K562 (cell line): ENCODE measurements at regions of chr1 and their contacts with region 1.

Region 1: GRCh38 chr1:9494929-9495758 is 44.1 kb upstream of the SLC25A33 start:
- DNase-seq: peak; percentile 79 to 90 (median 86)
- ATAC-seq: peak; percentile 95
- H3K4me3 ChIP-seq: 0 out of 2 replicates have a peak overlapping the region, but pooled peaks have one; percentile 24
- H3K27ac ChIP-seq: no peak overlapping the region
- H3K4me1 ChIP-seq: peaks cover 4 to 8% of the 10 kb centered on the region in 2 experiments; a peak in 3 of 5 replicates
- H3K27me3 ChIP-seq: peaks cover 8 to 54% of the 10 kb centered on the region in 2 experiments; a peak in 4 of 5 replicates
- CTCF ChIP-seq: peak; percentile 96 to 98 (median 97)
- EP300 ChIP-seq: no peak
- POLR2A ChIP-seq: no peak
- RAD21 ChIP-seq: peak; percentile 79 to 96

Region 2: GRCh38 chr1:9269078-9269501 is 226.1 kb before region 1 on chr1:
- CTCF ChIA-PET with region 1: interaction called, 32 read pairs
- POLR2A ChIA-PET with region 1: interaction called, 6 read pairs
- in situ Hi-C with region 1: no loop called
- intact Hi-C with region 1: loop called (anchors 1 kb)
- DNase-seq: no peak
- ATAC-seq: peak; percentile 36; the same call in 2 of the 3 replicates
- H3K4me3 ChIP-seq: no peak overlapping the region
- H3K27ac ChIP-seq: no peak overlapping the region
- H3K4me1 ChIP-seq: peaks cover 0 to 9% of the 10 kb centered on the region in 2 experiments; a peak in 2 of 5 replicates
- H3K27me3 ChIP-seq: peaks cover 64 to 83% of the 10 kb centered on the region in 2 experiments
- CTCF ChIP-seq: no peak
- EP300 ChIP-seq: no peak
- POLR2A ChIP-seq: no peak
- RAD21 ChIP-seq: no peak

Region 3: DNA sequence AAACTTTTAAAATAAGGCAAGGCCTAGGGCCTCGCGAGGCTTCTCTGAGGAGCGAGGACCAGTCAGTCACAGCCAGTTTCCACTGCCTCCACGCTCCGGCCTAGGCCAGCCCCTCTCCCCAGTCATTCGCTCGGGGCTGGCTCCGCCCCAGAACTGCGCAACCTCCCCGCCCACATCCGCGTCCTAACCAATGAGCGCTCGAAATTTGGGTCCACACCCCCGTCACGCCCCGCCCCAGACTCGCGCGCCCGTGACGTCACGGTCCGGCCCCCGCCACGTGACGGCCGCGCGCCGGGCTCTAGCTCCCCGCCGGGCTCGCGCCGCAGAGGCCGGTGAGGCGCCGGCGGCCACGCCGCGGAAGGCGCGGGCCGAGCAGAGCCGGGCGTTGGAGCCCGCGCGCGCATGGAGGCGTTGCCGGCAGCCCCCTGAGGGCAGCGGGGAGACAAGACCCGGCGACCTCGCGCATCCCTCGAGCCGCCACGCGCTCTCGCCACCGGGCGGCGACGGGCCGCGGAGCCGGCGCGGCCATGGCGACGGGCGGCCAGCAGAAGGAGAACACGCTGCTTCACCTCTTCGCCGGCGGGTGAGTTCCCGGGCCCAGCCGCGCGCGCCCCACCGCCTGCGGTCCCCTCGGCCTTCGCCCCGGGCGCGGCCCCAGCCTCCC is 44.2 kb after region 1 on chr1 and contains the start of gene SLC25A33:
- CTCF ChIA-PET with region 1: no interaction called
- POLR2A ChIA-PET with region 1: interaction called, 3 read pairs
- in situ Hi-C with region 1: no loop called
- intact Hi-C with region 1: loop called (anchors 5 kb)
- DNase-seq: peak; percentile 99
- ATAC-seq: peak; percentile 97
- H3K4me3 ChIP-seq: peak within 1 kb of the TSS; percentile 87
- H3K27ac ChIP-seq: peak within 1 kb of the TSS; percentile 85
- H3K4me1 ChIP-seq: peaks cover 23 to 32% of the 10 kb centered on the region in 2 experiments
- H3K27me3 ChIP-seq: no peaks in the 10 kb centered on the region
- CTCF ChIP-seq: no peak
- EP300 ChIP-seq: peak; percentile 49
- POLR2A ChIP-seq: peak; percentile 85
- RAD21 ChIP-seq: no peak; a peak in 1 of 4 replicates
- polyA plus RNA-seq, gene SLC25A33: 3.2 to 6.4 TPM

Region 4: DNA sequence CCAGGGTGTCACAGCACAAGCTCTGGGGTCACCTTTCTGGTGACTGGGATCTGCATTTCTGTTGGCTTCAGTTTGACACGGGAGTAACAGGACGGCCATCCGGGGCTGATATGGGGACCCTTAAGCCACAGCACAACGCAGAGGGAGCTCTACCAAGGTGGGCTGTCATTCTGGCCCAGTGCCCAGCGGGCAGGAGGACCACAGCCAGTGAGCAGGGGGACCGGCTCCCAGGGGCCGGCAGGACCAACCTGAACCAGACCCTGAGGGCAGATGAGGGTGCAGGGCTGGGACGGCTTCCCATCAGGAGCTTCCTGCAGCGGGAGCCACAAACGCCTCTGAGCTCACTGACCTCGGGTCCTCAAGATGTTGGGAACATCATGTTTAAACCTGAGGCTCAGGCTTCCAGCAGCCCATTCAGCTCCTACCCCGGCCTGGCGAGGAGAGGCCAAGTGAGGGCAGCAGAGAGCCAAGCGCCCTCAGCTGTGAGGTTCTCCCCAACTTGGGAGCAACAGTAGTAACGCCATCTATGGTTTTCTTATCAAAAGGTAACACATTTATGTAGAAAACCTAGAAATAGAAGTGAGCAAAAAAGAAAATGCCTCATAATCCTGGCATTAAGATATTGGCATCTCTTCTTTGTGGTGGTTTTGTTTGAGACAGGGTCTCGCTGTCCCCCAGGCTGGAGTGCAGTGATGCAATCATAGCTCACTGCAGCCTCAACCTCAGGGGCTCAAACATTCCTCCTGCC is 120.3 kb after region 1 on chr1:
- CTCF ChIA-PET with region 1: interaction called, 4 read pairs
- POLR2A ChIA-PET with region 1: no interaction called
- in situ Hi-C with region 1: no loop called
- intact Hi-C with region 1: loop called (anchors 1 kb)
- DNase-seq: peak; percentile 79 to 85 (median 82)
- ATAC-seq: peak; percentile 96
- H3K4me3 ChIP-seq: no peak overlapping the region
- H3K27ac ChIP-seq: no peak overlapping the region
- H3K4me1 ChIP-seq: peaks cover 4 to 22% of the 10 kb centered on the region in 2 experiments; a peak in 3 of 5 replicates
- H3K27me3 ChIP-seq: peaks cover 8 to 17% of the 10 kb centered on the region in 2 experiments
- CTCF ChIP-seq: peak; percentile 96 to 97 (median 96)
- EP300 ChIP-seq: peak; percentile 23; the same call in 1 of the 2 replicates
- POLR2A ChIP-seq: 0 out of 2 replicates have a peak, but pooled peaks have one; percentile 45
- RAD21 ChIP-seq: peak; percentile 57 to 75

Region 5: GRCh38 chr1:9689011-9689706 is 194.0 kb after region 1 on chr1:
- CTCF ChIA-PET with region 1: no interaction called
- POLR2A ChIA-PET with region 1: no interaction called
- in situ Hi-C with region 1: no loop called
- intact Hi-C with region 1: no loop called
- DNase-seq: peak; percentile 89 to 98 (median 96)
- ATAC-seq: peak; percentile 86
- H3K4me3 ChIP-seq: peak overlapping the region; percentile 51
- H3K27ac ChIP-seq: peak overlapping the region; percentile 43; the same call in 1 of the 3 replicates
- H3K4me1 ChIP-seq: peaks cover 31 to 39% of the 10 kb centered on the region in 2 experiments
- H3K27me3 ChIP-seq: no peaks in the 10 kb centered on the region
- CTCF ChIP-seq: no peak
- EP300 ChIP-seq: no peak
- POLR2A ChIP-seq: no peak
- RAD21 ChIP-seq: no peak